ENCODE measurements at regions of chr9 and their contacts with region 1.

Region 1: GRCh38 chr9:134758949-134759607 is 117.5 kb downstream of the COL5A1 start:
- DNase-seq: no peak
- ATAC-seq: no peak
- H3K4me3 ChIP-seq: no peak overlapping the region
- H3K27ac ChIP-seq: no peak overlapping the region
- H3K4me1 ChIP-seq: no peaks in the 10 kb centered on the region
- H3K27me3 ChIP-seq: no peaks in the 10 kb centered on the region
- CTCF ChIP-seq: no peak

Region 2: DNA sequence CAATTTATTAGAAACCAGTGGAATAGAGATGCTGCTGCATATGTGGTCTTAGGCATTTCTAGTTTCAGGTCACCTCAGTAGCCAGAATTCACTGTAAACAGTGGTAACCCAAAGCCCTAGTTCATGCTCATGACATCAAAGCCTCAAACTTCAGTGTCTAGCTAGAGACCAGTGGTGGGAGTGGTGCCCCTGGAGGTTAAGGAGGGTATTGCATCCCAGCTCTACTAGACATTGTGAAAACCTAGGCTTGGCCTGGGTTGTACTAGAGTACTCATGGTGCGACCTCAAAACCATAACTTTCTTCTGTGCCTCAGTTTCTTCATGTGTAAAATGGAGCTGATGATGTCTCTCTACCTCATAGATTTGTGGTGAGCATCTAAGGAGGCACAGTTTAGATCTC is 98.7 kb before region 1 on chr9:
- CTCF ChIA-PET with region 1: no interaction called
- POLR2A ChIA-PET with region 1: no interaction called
- in situ Hi-C with region 1: no loop called
- intact Hi-C with region 1: no loop called
- DNase-seq: peak; percentile 10
- ATAC-seq: no peak
- H3K4me3 ChIP-seq: no peak overlapping the region
- H3K27ac ChIP-seq: no peak overlapping the region
- H3K4me1 ChIP-seq: no peaks in the 10 kb centered on the region
- H3K27me3 ChIP-seq: no peaks in the 10 kb centered on the region
- CTCF ChIP-seq: peak; percentile 63

Region 3: DNA sequence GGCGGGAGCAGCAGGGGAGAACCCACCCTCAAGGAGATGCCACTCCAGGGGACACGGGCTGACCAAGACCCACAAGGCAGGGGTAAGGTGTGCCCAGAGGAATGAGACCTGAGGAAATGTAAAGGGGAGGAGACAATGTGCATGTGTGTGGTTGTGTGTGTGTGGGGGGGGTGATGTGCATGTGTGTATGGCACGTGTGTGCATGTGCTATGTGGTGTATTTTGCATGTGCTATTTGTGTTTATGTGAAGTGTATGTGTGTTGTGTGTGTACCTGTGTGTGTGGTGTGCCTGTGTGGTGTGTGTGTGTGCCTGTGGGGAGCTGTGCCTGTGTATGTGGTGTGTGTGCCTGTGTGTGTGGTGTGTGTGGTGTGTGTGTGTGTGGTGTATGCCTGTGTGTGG is 88.1 kb after region 1 on chr9:
- CTCF ChIA-PET with region 1: interaction called, 13 read pairs
- POLR2A ChIA-PET with region 1: no interaction called
- in situ Hi-C with region 1: no loop called
- intact Hi-C with region 1: no loop called
- DNase-seq: no peak
- ATAC-seq: no peak
- H3K4me3 ChIP-seq: no peak overlapping the region
- H3K27ac ChIP-seq: no peak overlapping the region
- H3K4me1 ChIP-seq: no peaks in the 10 kb centered on the region
- H3K27me3 ChIP-seq: no peaks in the 10 kb centered on the region
- CTCF ChIP-seq: no peak